B cell (primary cell): ENCODE measurements at regions of chr20 and their contacts with region 1.

Region 1: DNA sequence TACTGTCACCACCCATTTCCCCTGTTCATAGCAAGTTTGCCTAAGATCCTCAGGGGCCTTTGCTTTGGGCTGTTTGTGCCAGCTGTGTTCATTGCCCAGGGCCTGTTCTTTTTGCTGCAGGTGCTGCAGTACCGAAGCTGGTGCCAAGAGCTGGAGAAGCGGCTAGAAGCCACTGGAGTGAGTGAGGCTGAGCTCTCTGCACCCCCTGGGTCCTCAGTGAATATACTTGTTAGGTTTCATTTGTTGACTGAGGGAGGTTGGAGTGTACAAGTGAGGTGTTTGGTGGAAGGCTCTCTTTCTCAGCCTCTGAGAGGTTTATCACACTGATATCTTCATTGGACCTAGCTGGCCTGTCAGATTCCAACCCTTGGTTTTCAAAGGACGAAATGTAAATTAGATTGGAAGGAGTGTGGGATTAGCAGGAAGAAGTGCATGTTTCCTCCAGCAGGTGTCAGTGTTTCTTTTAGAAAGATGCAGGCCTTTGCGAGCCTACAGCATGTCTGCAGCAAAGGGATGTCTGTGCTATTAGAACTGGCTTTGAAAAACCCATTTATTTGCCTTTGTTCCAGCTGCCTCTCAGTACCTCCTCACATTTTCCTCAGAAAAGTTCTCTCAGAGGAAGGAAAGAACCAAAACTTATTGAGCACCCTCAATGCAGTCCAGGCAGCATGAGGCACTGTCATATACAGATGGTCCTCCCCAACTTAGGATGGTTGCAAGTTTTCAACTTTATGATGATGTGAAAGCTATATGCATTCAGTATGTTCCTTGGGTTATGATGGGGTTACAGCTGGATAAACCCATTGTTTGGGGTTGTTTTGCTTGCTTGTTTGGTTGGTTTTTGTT is 8.3 kb downstream of the CEP250 start:
- DNase-seq: peak; percentile 80
- ATAC-seq: peak; percentile 77
- H3K4me3 ChIP-seq: no peak overlapping the region
- H3K4me3 Mint-ChIP-seq: no peak overlapping the region
- H3K27ac ChIP-seq: no peak overlapping the region
- H3K27ac Mint-ChIP-seq: peak overlapping the region; percentile 32
- H3K4me1 ChIP-seq: peaks cover 9 to 17% of the 10 kb centered on the region in 2 donors
- H3K4me1 Mint-ChIP-seq: peaks cover 15% of the 10 kb centered on the region
- H3K27me3 ChIP-seq: no peaks in the 10 kb centered on the region
- H3K27me3 Mint-ChIP-seq: no peaks in the 10 kb centered on the region
- CTCF ChIP-seq: peak; percentile 89

Region 2: GRCh38 chr20:35410613-35411012 is 53.1 kb before region 1 on chr20:
- CTCF ChIA-PET with region 1: no interaction called
- POLR2A ChIA-PET with region 1: no interaction called
- intact Hi-C with region 1: no loop called
- DNase-seq: no peak
- ATAC-seq: no peak
- H3K4me3 ChIP-seq: no peak overlapping the region
- H3K4me3 Mint-ChIP-seq: peak overlapping the region; percentile 99
- H3K27ac ChIP-seq: no peak overlapping the region
- H3K27ac Mint-ChIP-seq: peak overlapping the region; percentile 99
- H3K4me1 ChIP-seq: peaks cover 9 to 15% of the 10 kb centered on the region in 2 donors
- H3K4me1 Mint-ChIP-seq: peaks cover 24% of the 10 kb centered on the region
- H3K27me3 ChIP-seq: no peaks in the 10 kb centered on the region
- H3K27me3 Mint-ChIP-seq: peaks cover 4% of the 10 kb centered on the region
- CTCF ChIP-seq: no peak

Region 3: GRCh38 chr20:35447082-35447789 is 16.4 kb before region 1 on chr20:
- CTCF ChIA-PET with region 1: interaction called, 11 read pairs
- POLR2A ChIA-PET with region 1: no interaction called
- intact Hi-C with region 1: no loop called
- DNase-seq: peak; percentile 84
- ATAC-seq: peak; percentile 99
- H3K4me3 ChIP-seq: peak overlapping the region in 3 of 5 experiments; percentile 30 to 52 (median 31)
- H3K4me3 Mint-ChIP-seq: peak overlapping the region; percentile 87
- H3K27ac ChIP-seq: no peak overlapping the region
- H3K27ac Mint-ChIP-seq: no peak overlapping the region
- H3K4me1 ChIP-seq: peaks cover 0 to 3% of the 10 kb centered on the region in 2 donors
- H3K4me1 Mint-ChIP-seq: peaks cover 6% of the 10 kb centered on the region
- H3K27me3 ChIP-seq: no peaks in the 10 kb centered on the region
- H3K27me3 Mint-ChIP-seq: peaks cover 8% of the 10 kb centered on the region
- CTCF ChIP-seq: peak; percentile 97

Region 4: GRCh38 chr20:35490736-35491181 is 27.1 kb after region 1 on chr20:
- CTCF ChIA-PET with region 1: interaction called, 16 read pairs
- POLR2A ChIA-PET with region 1: no interaction called
- intact Hi-C with region 1: no loop called
- DNase-seq: peak; percentile 81
- ATAC-seq: peak; percentile 100
- H3K4me3 ChIP-seq: peak overlapping the region; percentile 73 to 92 (median 85)
- H3K4me3 Mint-ChIP-seq: peak overlapping the region; percentile 98
- H3K27ac ChIP-seq: peak overlapping the region; percentile 83 to 92
- H3K27ac Mint-ChIP-seq: peak overlapping the region; percentile 96
- H3K4me1 ChIP-seq: peaks cover 39 to 58% of the 10 kb centered on the region in 2 donors
- H3K4me1 Mint-ChIP-seq: peaks cover 54% of the 10 kb centered on the region
- H3K27me3 ChIP-seq: no peaks in the 10 kb centered on the region
- H3K27me3 Mint-ChIP-seq: no peaks in the 10 kb centered on the region
- CTCF ChIP-seq: no peak

Region 5: DNA sequence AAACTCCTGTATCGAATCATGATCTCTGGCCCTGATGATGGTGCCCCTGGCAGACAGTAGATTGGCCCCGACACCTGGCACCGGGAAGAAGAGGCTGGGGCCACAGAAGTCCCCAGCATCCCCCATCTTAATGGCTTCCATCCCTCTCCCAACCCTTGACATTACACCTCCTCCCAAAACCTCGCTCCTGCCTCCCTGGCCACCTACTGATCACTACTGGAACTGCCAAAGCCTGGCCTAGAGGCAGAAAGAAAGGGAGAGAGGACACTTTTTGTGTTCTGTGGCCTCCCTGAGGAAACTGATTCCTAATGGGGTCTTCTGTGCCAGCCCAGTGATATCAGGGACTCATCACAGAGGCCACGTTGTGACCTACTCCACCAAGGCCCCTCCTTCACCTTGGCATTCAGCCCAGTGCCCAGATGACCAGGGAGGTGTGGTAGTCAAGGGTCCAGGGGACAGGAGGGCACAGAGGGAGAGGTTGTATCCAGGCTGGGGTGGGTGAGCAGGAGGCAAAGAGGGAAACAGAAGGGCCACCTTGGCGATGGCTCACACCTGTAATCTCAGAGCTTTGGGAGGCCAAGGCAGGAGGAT is 59.7 kb after region 1 on chr20:
- CTCF ChIA-PET with region 1: interaction called, 4 read pairs
- POLR2A ChIA-PET with region 1: no interaction called
- intact Hi-C with region 1: loop called (anchors 1 kb)
- DNase-seq: no peak
- ATAC-seq: peak; percentile 41
- H3K4me3 ChIP-seq: no peak overlapping the region
- H3K4me3 Mint-ChIP-seq: no peak overlapping the region
- H3K27ac ChIP-seq: no peak overlapping the region
- H3K27ac Mint-ChIP-seq: no peak overlapping the region
- H3K4me1 ChIP-seq: no peaks in the 10 kb centered on the region
- H3K4me1 Mint-ChIP-seq: no peaks in the 10 kb centered on the region
- H3K27me3 ChIP-seq: no peaks in the 10 kb centered on the region
- H3K27me3 Mint-ChIP-seq: no peaks in the 10 kb centered on the region
- CTCF ChIP-seq: peak; percentile 59

Region 6: DNA sequence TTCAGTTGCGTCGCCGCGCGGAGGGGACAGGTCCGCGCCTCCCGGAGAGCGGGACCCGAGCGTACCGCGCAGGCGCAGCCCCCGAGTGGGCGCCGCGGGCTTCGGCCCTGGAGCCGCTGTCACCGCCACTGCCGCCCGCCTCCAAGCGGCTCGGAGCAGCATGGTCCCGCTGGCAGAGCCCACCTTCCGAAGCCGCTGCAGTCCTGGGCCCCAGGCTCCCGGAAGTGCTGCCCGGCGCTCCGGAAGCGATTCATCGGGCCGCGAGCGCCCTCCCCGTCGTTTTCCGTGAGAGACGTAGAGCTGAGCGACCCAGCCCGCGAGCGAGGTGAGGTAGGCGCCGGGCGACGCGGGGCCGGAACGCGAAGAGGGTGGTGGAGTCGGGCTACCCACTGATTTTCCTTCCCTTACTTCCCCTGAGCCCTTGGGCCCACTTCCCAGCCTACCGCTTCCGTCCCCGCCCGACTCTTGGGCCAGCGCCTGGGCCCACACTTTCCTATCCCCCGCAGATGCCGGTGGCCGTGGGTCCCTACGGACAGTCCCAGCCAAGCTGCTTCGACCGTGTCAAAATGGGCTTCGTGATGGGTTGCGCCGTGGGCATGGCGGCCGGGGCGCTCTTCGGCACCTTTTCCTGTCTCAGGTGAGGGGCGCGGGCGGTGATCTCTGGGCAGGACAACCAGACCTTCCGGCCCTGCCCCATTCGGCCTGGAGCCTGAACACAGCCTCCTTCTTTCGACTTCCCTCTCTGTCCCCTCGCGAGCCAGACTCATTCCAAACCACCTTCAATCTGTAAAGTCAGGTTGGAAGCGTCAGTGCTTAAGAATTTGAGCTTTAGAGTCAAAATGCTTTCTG is 235.7 kb after region 1 on chr20 and contains the starts of genes NFS1 and ROMO1:
- CTCF ChIA-PET with region 1: interaction called, 4 read pairs
- POLR2A ChIA-PET with region 1: no interaction called
- intact Hi-C with region 1: loop called (anchors 1 kb)
- DNase-seq: peak; percentile 92
- ATAC-seq: peak; percentile 88
- H3K4me3 ChIP-seq: peak within 1 kb of the TSS; percentile 69 to 98 (median 91)
- H3K4me3 Mint-ChIP-seq: peak within 1 kb of the TSS; percentile 85
- H3K27ac ChIP-seq: peak within 1 kb of the TSS; percentile 84 to 96
- H3K27ac Mint-ChIP-seq: peak within 1 kb of the TSS; percentile 97
- H3K4me1 ChIP-seq: peaks cover 17 to 23% of the 10 kb centered on the region in 2 donors
- H3K4me1 Mint-ChIP-seq: peaks cover 33% of the 10 kb centered on the region
- H3K27me3 ChIP-seq: no peaks in the 10 kb centered on the region
- H3K27me3 Mint-ChIP-seq: no peaks in the 10 kb centered on the region
- CTCF ChIP-seq: peak; percentile 31
- total RNA-seq, gene NFS1: 29.0 and 29.4 TPM in 2 replicates
- total RNA-seq, gene ROMO1: 33.2 and 38.1 TPM in 2 replicates